CD14-positive monocyte (primary cell): ENCODE measurements at regions of chr17 and their contacts with region 1.

Region 1: GRCh38 chr17:61635913-61636432 is 45.0 kb upstream of the NACA2 start:
- DNase-seq: peak; percentile 23 to 42 (median 30)
- H3K4me3 ChIP-seq: no peak overlapping the region
- H3K4me3 Mint-ChIP-seq: no peak overlapping the region
- H3K27ac ChIP-seq: no peak overlapping the region
- H3K27ac Mint-ChIP-seq: no peak overlapping the region
- H3K4me1 ChIP-seq: no peaks in the 10 kb centered on the region
- H3K4me1 Mint-ChIP-seq: no peaks in the 10 kb centered on the region
- H3K27me3 ChIP-seq: no peaks in the 10 kb centered on the region
- H3K27me3 Mint-ChIP-seq: peaks cover 0 to 6% (median 2%) of the 10 kb centered on the region in 3 donors
- CTCF ChIP-seq: peak; percentile 75

Region 2: DNA sequence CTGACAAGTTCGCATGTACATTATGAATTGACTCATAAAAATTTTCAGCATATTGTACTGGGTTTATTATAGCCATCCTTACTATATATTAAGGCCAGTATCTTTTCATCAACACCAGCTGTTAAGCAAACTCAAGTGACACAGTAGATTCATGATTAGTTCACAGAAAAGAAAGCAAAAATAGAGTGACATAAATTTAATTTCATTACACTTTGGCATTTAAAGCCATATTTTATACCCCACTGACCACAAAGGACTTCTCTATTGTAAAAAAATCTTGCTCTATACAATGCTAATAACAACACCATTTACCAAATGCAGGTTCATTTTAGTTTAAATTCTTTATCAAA is 24.3 kb before region 1 on chr17:
- intact Hi-C with region 1: no loop called
- DNase-seq: no peak
- H3K4me3 ChIP-seq: no peak overlapping the region
- H3K4me3 Mint-ChIP-seq: no peak overlapping the region
- H3K27ac ChIP-seq: no peak overlapping the region
- H3K27ac Mint-ChIP-seq: no peak overlapping the region
- H3K4me1 ChIP-seq: no peaks in the 10 kb centered on the region
- H3K4me1 Mint-ChIP-seq: peaks cover 4% of the 10 kb centered on the region
- H3K27me3 ChIP-seq: no peaks in the 10 kb centered on the region
- H3K27me3 Mint-ChIP-seq: peaks cover 2% of the 10 kb centered on the region in 3 donors
- CTCF ChIP-seq: no peak

Region 3: DNA sequence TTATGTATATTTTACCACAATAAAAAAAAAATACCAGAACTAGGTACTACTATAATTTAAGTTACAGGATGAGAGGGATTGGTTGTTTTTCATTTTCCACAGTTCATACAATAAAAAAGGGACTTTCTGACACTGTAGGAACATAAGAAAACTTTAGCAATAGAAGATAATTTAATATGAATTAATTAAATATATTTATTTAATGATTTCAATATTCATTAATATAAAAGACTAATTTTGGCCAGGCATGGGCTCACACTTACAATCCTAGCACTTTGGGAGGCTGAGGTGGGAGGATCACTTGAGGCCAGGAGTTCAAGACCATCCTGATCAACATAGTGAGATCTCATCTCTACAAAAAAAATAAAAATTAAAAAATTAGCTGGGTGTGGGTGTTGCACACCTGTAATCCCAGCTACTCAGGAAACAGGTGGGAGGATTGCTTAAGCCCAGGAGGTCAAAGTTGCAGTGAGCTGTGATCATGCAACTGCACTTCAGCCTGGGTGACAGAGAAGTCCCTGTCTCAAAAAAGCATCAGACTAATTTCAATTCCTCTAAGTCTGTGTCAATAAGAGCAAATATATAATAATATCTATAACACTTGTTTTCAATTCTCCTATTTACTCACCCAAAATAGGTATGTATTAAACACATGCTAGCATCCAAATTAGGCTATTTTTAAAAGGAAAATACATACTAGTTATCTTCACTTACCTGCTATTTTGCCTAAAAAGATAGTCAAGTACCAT is 147.8 kb after region 1 on chr17:
- intact Hi-C with region 1: no loop called
- DNase-seq: no peak
- H3K4me3 ChIP-seq: no peak overlapping the region
- H3K4me3 Mint-ChIP-seq: no peak overlapping the region
- H3K27ac ChIP-seq: no peak overlapping the region
- H3K27ac Mint-ChIP-seq: no peak overlapping the region
- H3K4me1 ChIP-seq: no peaks in the 10 kb centered on the region
- H3K4me1 Mint-ChIP-seq: no peaks in the 10 kb centered on the region
- H3K27me3 ChIP-seq: no peaks in the 10 kb centered on the region
- H3K27me3 Mint-ChIP-seq: peaks cover 0 to 1% (median 0%) of the 10 kb centered on the region in 3 donors
- CTCF ChIP-seq: no peak

Region 4: DNA sequence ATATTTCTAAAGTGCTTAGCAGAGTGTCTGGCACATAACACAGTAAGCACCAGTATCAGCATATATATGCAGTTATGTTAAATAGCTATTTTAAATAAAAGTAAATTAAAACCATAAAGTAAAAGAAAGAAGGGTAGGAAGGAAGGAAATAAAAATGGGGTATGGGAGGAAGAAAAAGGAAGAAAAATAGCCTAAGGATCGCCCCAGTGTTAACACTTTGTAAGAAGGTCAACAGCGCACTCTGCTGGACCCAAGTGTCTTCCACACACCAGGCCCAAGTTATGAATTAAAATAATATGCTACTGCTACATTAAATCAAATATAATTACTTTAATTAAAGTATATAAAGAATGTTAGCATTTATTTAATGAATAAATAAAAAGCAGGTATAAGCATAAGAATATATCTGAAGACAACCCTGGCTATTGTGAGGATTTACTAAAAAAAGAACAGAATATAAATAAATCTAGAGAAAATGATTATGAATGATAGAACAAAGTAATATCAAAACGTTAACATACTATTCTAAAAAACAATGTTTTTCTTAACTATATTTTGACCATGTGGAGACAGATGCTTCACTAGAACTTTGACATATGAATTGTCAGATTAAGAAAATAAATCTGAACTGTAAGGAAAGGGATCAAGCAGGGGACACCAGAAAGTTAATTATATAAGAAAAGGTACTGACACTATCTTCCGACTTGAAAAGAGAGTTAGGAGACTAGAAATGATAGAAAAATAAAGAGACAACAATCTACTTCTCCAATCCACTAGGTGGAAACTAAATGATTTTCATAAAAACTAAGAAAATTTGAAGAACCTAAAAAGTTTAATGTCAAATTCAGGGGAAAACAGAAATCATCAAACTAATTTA is 201.4 kb after region 1 on chr17:
- intact Hi-C with region 1: loop called (anchors 5 kb)
- DNase-seq: peak; percentile 54 to 64 (median 63)
- H3K4me3 ChIP-seq: no peak overlapping the region
- H3K4me3 Mint-ChIP-seq: no peak overlapping the region
- H3K27ac ChIP-seq: no peak overlapping the region
- H3K27ac Mint-ChIP-seq: no peak overlapping the region
- H3K4me1 ChIP-seq: no peaks in the 10 kb centered on the region
- H3K4me1 Mint-ChIP-seq: no peaks in the 10 kb centered on the region
- H3K27me3 ChIP-seq: no peaks in the 10 kb centered on the region
- H3K27me3 Mint-ChIP-seq: no peaks in the 10 kb centered on the region
- CTCF ChIP-seq: peak; percentile 93